ENCODE measurements at regions of chr6 and their contacts with region 1.

Region 1: GRCh38 chr6:123712831-123713230 is 76.1 kb upstream of the TRDN start:
- DNase-seq: no peak
- H3K4me3 ChIP-seq: no peak overlapping the region
- H3K27ac ChIP-seq: no peak overlapping the region
- H3K4me1 ChIP-seq: no peaks in the 10 kb centered on the region
- H3K27me3 ChIP-seq: no peaks in the 10 kb centered on the region
- CTCF ChIP-seq: no peak
- EP300 ChIP-seq: no peak
- POLR2A ChIP-seq: no peak

Region 2: GRCh38 chr6:123276546-123276980 is 436.3 kb before region 1 on chr6:
- intact Hi-C with region 1: no loop called
- DNase-seq: no peak
- H3K4me3 ChIP-seq: no peak overlapping the region
- H3K27ac ChIP-seq: no peak overlapping the region
- H3K4me1 ChIP-seq: no peaks in the 10 kb centered on the region
- H3K27me3 ChIP-seq: no peaks in the 10 kb centered on the region
- CTCF ChIP-seq: no peak
- EP300 ChIP-seq: no peak
- POLR2A ChIP-seq: no peak

Region 3: GRCh38 chr6:123415844-123416468 is 296.9 kb before region 1 on chr6:
- intact Hi-C with region 1: loop called (anchors 5 kb)
- DNase-seq: no peak
- H3K4me3 ChIP-seq: no peak overlapping the region
- H3K27ac ChIP-seq: no peak overlapping the region
- H3K4me1 ChIP-seq: no peaks in the 10 kb centered on the region
- H3K27me3 ChIP-seq: no peaks in the 10 kb centered on the region
- CTCF ChIP-seq: peak in 3 of 4 experiments; percentile 34 to 72 (median 48)
- EP300 ChIP-seq: no peak
- POLR2A ChIP-seq: no peak

Region 4: GRCh38 chr6:123745895-123746294 is 33.1 kb after region 1 on chr6:
- intact Hi-C with region 1: no loop called
- DNase-seq: no peak
- H3K4me3 ChIP-seq: no peak overlapping the region
- H3K27ac ChIP-seq: no peak overlapping the region
- H3K4me1 ChIP-seq: no peaks in the 10 kb centered on the region
- H3K27me3 ChIP-seq: no peaks in the 10 kb centered on the region
- CTCF ChIP-seq: no peak
- EP300 ChIP-seq: no peak
- POLR2A ChIP-seq: no peak

Measured in sigmoid colon (tissue), 7 donors.